PC-3 (cell line): ENCODE measurements at regions of chr7 and their contacts with region 1.

Region 1: DNA sequence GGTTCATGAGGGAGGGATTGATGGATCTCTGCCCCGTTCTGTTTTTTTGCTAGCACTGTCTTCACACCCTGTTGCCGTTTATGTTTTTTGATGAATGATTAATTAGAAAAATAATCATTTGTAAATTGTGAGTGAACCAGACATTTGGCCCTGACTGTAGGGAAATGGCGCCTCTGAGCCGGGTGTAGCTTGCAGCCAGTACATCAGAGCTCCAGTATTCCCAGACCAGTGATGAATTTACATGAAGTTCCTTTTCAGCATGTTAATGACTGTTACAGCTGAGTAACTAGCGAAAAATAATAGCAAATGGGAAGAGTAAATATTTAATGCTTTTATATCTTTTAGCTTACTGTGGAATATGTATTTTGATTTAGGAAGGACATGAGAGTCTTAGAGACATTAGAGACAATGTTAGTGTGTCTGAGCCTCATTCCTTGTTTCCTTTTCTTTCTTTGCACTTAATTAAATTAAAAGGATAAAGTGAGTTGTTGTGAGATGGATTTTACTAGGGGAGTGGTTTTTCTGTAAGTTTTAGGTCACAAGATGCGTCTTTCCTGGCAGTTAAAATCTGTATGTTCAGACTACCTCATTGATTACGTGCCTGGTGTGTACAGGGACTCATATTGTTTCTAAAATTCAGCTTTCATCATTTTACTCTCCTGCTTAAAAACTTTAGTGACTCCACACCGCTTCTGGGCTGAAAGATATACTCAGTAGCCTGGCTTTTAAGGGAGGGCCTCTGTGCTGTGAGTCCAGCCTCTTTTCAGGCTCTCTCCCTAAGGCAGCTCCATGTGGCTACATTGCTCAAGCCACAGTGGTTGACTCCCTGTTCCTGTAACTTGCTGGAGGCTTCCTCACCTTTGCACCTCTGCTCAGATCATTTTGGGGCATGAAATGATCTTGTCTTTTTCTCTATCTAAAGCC is 86.4 kb downstream of the AUTS2 start:
- DNase-seq: no peak
- ATAC-seq: no peak
- H3K4me3 ChIP-seq: no peak overlapping the region
- H3K27ac ChIP-seq: no peak overlapping the region
- H3K4me1 ChIP-seq: no peaks in the 10 kb centered on the region
- H3K27me3 ChIP-seq: no peaks in the 10 kb centered on the region
- CTCF ChIP-seq: no peak

Region 2: DNA sequence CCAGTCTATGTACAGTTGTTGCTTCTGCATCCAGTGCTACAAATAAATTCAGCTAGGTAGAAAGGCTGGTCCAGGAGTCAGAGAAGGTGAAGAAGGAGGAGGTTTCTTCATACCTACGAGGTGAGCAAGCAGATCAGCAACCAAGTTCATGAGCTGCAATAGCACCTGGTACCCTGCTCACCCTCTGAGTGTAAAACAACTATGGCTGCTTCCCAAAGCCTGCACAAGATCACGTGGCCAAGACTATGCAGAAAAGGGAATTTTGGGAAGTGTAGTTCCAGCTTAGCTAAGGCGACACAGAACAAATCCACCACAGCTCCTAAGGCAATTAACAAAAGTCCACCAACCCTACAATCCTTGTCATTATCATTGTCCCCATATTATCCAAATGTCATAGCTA is 182.3 kb before region 1 on chr7:
- CTCF ChIA-PET with region 1: no interaction called
- POLR2A ChIA-PET with region 1: no interaction called
- intact Hi-C with region 1: loop called (anchors 10 kb)
- DNase-seq: no peak
- ATAC-seq: no peak
- H3K4me3 ChIP-seq: no peak overlapping the region
- H3K27ac ChIP-seq: no peak overlapping the region
- H3K4me1 ChIP-seq: no peaks in the 10 kb centered on the region
- H3K27me3 ChIP-seq: no peaks in the 10 kb centered on the region
- CTCF ChIP-seq: no peak